H1 (cell line): ENCODE measurements at regions of chr15 and their contacts with region 1.

Region 1: DNA sequence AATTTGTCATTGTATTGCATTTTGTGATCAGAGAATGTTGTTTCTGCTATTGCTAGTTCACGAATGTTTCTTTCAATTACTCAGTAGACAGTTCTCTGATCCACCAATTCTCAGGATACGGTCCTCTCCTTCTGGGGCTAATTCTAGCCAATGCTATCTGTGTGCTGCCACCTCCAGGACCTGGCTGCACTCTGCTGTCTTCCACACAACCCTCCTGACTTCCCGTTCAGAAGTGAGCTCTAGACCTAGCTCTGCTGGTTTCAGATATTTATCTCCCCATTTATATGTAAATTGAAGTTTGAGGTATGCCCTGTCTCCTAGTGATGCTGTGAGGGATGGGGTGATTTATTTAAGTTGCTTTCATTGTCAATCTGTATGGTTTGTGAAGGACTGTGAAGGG is 21.7 kb upstream of the UBL7 start:
- DNase-seq: no peak
- H3K4me3 ChIP-seq: no peak overlapping the region
- H3K27ac ChIP-seq: no peak overlapping the region
- H3K4me1 ChIP-seq: peaks cover 0 to 2% (median 0%) of the 10 kb centered on the region in 4 experiments; a peak in 2 of 7 replicates
- H3K27me3 ChIP-seq: no peaks in the 10 kb centered on the region
- CTCF ChIP-seq: peak; percentile 44 to 55 (median 48)
- EP300 ChIP-seq: no peak
- POLR2A ChIP-seq: no peak
- RAD21 ChIP-seq: peak; percentile 35 to 51; a peak in 3 of 4 replicates

Region 2: GRCh38 chr15:74373731-74374647 is 108.7 kb before region 1 on chr15:
- CTCF ChIA-PET with region 1: interaction called, 63 read pairs
- POLR2A ChIA-PET with region 1: interaction called, 4 read pairs
- DNase-seq: peak; percentile 79 to 97
- H3K4me3 ChIP-seq: peak overlapping the region; percentile 37 to 74 (median 62)
- H3K27ac ChIP-seq: no peak overlapping the region
- H3K4me1 ChIP-seq: peaks cover 4 to 15% (median 9%) of the 10 kb centered on the region in 4 experiments
- H3K27me3 ChIP-seq: peaks cover 0 to 3% (median 0%) of the 10 kb centered on the region in 4 experiments; a peak in 3 of 7 replicates
- CTCF ChIP-seq: peak; percentile 85 to 93 (median 90)
- EP300 ChIP-seq: no peak
- POLR2A ChIP-seq: peak in 1 of 2 experiments; percentile 44; a peak in 1 of 3 replicates
- RAD21 ChIP-seq: peak; percentile 92 to 94

Region 3: DNA sequence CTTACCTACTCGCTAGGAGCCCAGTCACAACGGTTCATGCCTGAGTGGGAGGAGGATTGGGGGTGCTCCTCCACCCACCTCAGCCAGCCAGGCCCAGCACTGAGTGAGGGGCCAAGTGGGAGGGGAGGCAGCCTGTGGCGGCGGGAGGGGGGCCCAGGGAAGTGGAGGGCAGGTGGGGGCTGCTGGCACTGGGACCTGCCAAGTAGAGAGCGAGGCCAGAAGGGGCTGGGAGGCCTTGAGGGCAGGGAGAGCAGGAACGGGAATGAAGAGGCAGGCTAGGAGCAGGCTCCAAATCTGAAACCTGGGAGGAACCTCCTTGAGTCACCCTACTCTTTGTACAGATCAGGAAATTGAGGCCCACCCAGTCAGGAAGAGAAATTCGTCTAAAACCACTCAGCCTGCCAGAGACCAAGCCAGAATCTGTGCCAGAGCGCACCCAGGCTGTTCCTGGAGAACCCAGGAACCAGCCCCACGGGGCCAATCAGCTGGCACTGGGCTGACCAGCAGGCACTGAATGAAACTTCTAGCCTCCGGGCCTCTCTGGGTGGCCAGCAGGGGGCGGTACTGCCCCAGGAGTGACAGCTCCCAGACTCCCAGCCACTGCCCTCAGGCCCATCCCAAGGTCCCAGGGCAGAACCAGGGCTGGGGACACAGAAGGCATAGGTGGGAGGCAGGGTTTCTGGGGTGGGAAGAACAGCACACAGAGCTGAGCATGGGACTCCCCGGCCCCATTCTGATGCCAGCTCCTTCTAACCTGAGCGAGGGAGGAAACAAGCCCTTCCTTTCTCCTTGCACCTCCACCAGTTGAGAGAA is 100.5 kb before region 1 on chr15:
- CTCF ChIA-PET with region 1: interaction called, 63 read pairs
- POLR2A ChIA-PET with region 1: interaction called, 4 read pairs
- DNase-seq: peak; percentile 78 to 96
- H3K4me3 ChIP-seq: no peak overlapping the region
- H3K27ac ChIP-seq: no peak overlapping the region
- H3K4me1 ChIP-seq: peaks cover 0 to 18% (median 11%) of the 10 kb centered on the region in 4 experiments; a peak in 5 of 7 replicates
- H3K27me3 ChIP-seq: no peaks in the 10 kb centered on the region
- CTCF ChIP-seq: peak; percentile 85 to 98 (median 94)
- EP300 ChIP-seq: no peak
- POLR2A ChIP-seq: no peak
- RAD21 ChIP-seq: peak; percentile 98 to 100

Region 4: DNA sequence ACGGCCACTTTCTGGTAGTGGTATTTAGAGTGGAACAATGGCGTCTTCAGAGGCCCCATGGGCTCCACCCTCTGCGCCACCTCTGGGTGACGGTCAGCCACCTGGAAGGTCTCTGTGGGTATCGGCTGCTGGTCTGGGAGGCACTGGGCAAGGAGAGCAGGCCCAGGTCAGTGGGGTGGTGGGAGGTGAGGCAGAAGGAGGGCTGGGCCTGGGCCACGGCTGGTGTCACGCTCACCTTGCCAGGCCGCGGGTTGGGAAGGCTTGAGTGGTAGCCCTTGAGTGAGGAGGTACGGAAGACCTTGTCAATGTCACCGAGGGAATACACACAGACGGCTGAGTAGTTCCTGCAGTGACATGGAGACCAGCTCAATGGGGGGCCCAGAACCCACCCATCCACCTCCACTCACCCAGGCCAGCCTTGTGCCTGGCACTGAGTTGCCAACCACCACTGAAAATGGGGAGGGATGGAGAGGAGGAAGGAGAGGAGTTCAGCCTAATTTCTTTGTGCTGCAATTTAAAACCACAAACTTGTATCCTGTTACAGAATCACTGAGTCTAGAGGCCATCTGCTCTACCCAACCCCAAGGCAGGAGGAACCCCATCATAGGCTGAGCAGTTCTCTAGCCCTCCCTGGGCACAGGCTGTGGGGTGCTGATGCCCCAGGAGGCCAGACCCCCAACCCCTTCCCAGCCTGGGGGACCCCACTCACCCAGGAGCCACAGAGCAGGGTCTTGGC is 67.9 kb before region 1 on chr15:
- CTCF ChIA-PET with region 1: no interaction called
- POLR2A ChIA-PET with region 1: no interaction called
- DNase-seq: no peak
- H3K4me3 ChIP-seq: no peak overlapping the region
- H3K27ac ChIP-seq: no peak overlapping the region
- H3K4me1 ChIP-seq: no peaks in the 10 kb centered on the region
- H3K27me3 ChIP-seq: no peaks in the 10 kb centered on the region
- CTCF ChIP-seq: no peak
- EP300 ChIP-seq: no peak
- POLR2A ChIP-seq: no peak
- RAD21 ChIP-seq: no peak

Region 5: DNA sequence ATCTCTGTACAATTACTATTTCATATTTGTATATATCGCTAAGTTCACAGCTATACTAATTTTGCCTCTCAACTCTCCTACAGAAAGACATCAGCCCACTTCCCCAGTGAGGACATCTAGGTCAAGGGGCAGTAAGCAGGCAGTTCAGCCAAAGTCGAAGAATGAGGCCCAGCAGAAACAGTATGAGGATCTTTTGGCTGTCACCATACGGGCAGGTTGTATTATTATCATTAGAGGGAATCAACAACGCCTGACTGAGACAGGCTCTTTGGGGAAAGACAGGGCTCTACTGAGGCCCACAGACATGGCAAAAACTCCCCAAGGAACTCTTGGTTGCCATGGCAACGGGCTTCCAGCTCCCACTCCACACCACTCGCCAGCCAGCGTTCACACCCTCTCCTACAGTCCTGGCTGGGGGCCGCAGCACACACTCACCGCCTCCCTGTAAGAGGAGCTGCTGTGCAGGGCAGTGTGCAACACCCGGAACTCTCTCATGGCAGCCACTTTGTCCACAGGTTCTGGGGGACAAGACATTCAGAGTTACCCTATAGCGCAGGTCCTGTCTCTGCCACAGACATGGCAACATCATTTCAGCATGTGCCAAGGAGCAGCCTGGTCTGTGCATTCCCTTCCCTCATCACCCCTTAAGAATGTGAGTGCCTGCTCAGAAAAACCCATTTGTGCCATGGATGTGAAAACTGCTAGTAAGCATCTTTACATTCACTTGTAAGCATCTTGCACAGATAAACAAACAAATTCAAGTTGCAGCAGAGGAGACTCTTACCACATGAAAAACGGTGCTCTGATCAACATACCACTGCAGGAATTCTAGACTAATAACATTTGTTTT is 30.6 kb before region 1 on chr15:
- CTCF ChIA-PET with region 1: interaction called, 10 read pairs
- POLR2A ChIA-PET with region 1: interaction called, 3 read pairs
- DNase-seq: no peak
- H3K4me3 ChIP-seq: no peak overlapping the region
- H3K27ac ChIP-seq: no peak overlapping the region
- H3K4me1 ChIP-seq: no peaks in the 10 kb centered on the region; a peak in 1 of 7 replicates
- H3K27me3 ChIP-seq: no peaks in the 10 kb centered on the region
- CTCF ChIP-seq: no peak
- EP300 ChIP-seq: no peak
- POLR2A ChIP-seq: no peak
- RAD21 ChIP-seq: no peak

Region 6: GRCh38 chr15:74470631-74471395 is 11.8 kb before region 1 on chr15:
- CTCF ChIA-PET with region 1: interaction called, 10 read pairs
- POLR2A ChIA-PET with region 1: interaction called, 3 read pairs
- DNase-seq: no peak
- H3K4me3 ChIP-seq: no peak overlapping the region
- H3K27ac ChIP-seq: no peak overlapping the region
- H3K4me1 ChIP-seq: no peaks in the 10 kb centered on the region
- H3K27me3 ChIP-seq: no peaks in the 10 kb centered on the region
- CTCF ChIP-seq: no peak
- EP300 ChIP-seq: no peak
- POLR2A ChIP-seq: no peak
- RAD21 ChIP-seq: no peak

Region 7: GRCh38 chr15:74795966-74796625 is 313.4 kb after region 1 on chr15:
- CTCF ChIA-PET with region 1: no interaction called
- POLR2A ChIA-PET with region 1: no interaction called
- DNase-seq: no peak
- H3K4me3 ChIP-seq: no peak overlapping the region
- H3K27ac ChIP-seq: no peak overlapping the region
- H3K4me1 ChIP-seq: peaks cover 0 to 12% (median 5%) of the 10 kb centered on the region in 4 experiments; a peak in 6 of 7 replicates
- H3K27me3 ChIP-seq: no peaks in the 10 kb centered on the region
- CTCF ChIP-seq: no peak
- EP300 ChIP-seq: no peak
- POLR2A ChIP-seq: no peak
- RAD21 ChIP-seq: no peak